ENCODE measurements at regions of chr11 and their contacts with region 1.

Region 1: GRCh38 chr11:124865921-124866583 is 820 bp downstream of the ROBO3 start:
- DNase-seq: peak in 1 of 2 experiments; percentile 73
- H3K4me3 ChIP-seq: peak overlapping the region; percentile 8
- H3K4me1 ChIP-seq: peaks cover 3% of the 10 kb centered on the region; the same call in 1 of the 2 replicates
- H3K27me3 ChIP-seq: peaks cover 93% of the 10 kb centered on the region

Region 2: DNA sequence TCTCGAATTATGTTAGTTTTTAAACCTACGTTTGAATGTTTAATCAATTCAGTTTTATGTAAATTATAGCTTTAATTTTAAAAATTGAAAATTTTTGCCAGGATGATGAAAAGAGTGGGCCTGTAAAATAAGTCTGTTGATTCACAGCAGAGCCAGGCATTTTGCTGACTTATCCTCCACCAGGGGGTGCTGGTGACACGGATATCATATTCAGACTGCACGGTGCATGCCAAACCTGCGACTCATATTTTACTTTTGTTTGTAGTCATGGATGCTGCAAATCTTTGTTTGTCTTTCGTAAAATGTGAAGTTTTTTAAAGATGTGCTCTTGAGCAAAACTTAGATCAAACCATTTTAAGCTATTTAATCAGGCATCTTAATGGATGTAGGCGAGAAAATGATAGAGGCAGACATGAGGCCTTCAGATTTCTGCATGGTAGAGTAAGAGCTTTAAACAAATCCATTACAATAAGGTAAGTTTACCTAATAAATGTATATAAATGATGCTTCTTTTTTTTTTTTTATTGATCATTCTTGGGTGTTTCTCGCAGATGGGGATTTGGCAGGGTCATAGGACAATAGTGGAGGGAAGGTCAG is 463.6 kb before region 1 on chr11:
- in situ Hi-C with region 1: loop called (anchors 25 kb)
- DNase-seq: peak; percentile 58 to 80
- H3K4me3 ChIP-seq: no peak overlapping the region
- H3K4me1 ChIP-seq: no peaks in the 10 kb centered on the region
- H3K27me3 ChIP-seq: 0 out of 2 replicates have a peak, but pooled peaks cover 3% of the 10 kb centered on the region